Sigmoid colon (tissue), 7 donors: ENCODE measurements at regions of chr1 and their contacts with region 1.

Region 1: DNA sequence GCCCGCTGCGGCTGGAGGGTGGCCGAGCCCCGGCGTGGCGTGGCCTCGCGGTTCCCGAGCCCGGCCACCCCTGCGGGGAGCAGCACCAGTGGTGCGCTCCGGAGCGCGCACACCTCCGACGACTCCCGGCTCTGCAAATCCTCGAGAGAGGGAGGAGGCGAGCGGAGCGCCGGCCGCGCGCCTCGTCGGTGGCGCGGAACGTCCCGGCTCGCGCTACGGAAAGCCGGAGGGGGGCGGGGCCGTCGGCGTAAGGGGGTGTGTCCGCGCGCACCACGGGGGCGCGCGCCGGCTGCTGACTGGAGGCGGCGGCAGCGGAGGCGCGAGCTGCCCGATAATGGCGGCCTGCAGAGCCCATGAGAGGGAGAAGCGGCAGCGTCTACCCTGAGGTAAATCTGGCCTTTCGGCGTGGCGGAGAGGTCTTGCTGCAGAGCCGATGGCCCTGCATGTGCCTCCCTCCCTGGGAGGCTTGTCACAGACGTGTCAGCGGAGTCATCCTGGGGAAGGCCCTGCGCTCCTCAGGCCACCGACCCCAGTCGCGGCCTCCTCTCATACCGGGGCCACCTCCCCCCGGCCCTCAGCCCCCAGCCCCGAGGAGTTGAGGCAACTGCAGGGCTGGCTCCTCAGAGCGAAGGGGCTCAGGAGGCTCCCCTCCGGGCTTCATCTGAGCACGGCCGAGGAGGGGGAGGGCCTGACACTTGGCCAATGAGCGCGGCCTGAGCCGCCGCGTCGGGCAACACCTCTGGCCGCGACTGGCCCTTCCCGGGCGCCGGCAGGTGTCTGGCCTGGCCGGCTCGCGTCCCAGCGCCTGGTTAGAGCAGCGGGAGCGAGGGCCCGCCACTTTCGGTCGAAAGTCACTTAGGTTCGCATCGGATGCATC is at the start of gene PDIK1L:
- DNase-seq: peak; percentile 96
- H3K4me3 ChIP-seq: peak within 1 kb of the TSS; percentile 90 to 97 (median 96)
- H3K27ac ChIP-seq: peak within 1 kb of the TSS; percentile 89 to 96 (median 95)
- H3K4me1 ChIP-seq: peaks cover 0 to 27% (median 23%) of the 10 kb centered on the region in 4 donors
- H3K27me3 ChIP-seq: no peaks in the 10 kb centered on the region
- CTCF ChIP-seq: no peak
- EP300 ChIP-seq: no peak
- POLR2A ChIP-seq: peak in 1 of 2 donors; percentile 21
- total RNA-seq, gene PDIK1L: 4.2 to 15.7 (median 6.6) TPM

Region 2: DNA sequence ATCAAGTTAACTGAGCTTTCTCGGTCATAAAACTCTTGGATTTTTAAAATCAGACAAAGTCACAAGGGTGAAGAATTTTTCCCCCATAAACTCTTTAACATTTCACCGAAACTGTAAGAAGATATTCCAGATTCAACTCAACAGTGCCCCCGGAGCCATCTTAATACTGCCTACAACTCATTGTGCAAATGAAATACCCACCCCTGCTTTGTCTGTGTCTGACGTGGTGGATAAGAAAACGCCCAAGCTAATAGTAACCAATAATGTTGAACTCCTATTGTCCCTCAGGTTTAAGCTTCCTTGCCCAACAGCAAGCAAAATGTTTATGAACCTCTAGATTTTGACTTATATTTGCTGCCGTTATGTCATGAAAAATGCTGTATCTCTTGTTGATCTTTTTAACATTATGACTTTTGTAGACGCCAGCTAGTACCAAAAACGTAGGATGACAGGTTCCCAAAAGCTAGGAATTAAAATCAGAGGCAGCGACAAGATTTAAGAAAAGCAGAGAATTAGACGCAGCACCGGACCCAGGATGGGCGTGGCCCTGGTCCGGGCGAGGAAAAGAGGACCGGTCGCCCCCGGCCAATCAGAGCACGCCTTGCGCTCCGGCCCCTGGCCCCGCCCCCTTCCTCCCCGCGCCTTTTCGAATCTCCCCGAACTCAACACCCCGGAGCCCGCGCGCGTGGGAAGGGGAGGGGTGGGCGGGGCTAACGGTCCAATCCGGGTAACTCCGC is 206.7 kb before region 1 on chr1:
- intact Hi-C with region 1: loop called (anchors 5 kb)
- DNase-seq: peak; percentile 97
- H3K4me3 ChIP-seq: peak overlapping the region; percentile 61 to 75 (median 68)
- H3K27ac ChIP-seq: peak overlapping the region; percentile 76 to 79 (median 78)
- H3K4me1 ChIP-seq: peaks cover 0 to 29% (median 20%) of the 10 kb centered on the region in 4 donors
- H3K27me3 ChIP-seq: no peaks in the 10 kb centered on the region
- CTCF ChIP-seq: no peak
- EP300 ChIP-seq: no peak
- POLR2A ChIP-seq: no peak

Region 3: DNA sequence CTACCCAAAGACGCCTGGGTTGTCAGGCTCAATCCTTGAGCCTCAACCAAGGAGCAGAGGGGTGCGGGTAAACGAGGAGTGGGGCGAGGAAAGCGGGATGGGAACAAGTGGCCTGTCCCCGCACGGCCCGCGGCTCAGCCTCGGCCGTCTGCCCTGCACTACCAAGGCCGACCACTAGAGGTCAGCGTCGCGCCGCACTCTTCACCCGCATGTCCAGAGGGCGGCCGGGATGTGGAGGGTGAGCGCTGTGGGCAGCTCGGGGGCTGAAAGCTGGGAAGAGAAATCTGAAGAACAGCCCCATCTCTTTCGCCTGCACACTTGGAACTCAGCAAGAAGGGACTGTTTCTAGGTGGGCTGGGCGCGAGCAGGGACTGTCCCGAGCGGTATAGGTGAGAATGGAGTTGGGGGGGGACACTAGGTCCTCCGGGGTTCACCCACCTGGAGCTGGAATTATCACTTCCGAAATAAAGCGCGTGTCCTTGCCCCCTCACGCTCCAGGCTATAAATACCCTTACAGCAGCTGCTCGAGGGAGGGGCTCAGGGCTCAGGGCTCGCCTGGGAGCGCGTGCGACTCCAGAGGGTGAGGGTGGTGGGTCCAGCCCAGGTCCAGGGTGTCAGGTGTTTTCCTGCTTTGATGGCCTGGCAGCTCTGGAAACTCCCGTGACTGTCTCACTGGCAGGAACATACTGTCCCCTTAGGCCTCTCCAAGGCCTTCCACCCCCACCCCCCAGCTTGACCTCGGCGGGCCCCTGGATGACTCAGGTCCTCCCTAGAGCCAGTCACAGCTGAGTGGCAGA is 75.6 kb before region 1 on chr1:
- intact Hi-C with region 1: loop called (anchors 2 kb)
- DNase-seq: peak; percentile 86
- H3K4me3 ChIP-seq: peak overlapping the region; percentile 58 to 80 (median 75)
- H3K27ac ChIP-seq: peak overlapping the region; percentile 84 to 91 (median 88)
- H3K4me1 ChIP-seq: peaks cover 0 to 15% (median 11%) of the 10 kb centered on the region in 4 donors
- H3K27me3 ChIP-seq: peaks cover 0 to 7% (median 0%) of the 10 kb centered on the region in 3 donors
- CTCF ChIP-seq: peak; percentile 97 to 100 (median 99)
- EP300 ChIP-seq: no peak
- POLR2A ChIP-seq: no peak

Region 4: GRCh38 chr1:26169669-26170471 is 58.1 kb after region 1 on chr1 and contains the start of gene ZNF593:
- intact Hi-C with region 1: loop called (anchors 2 kb)
- DNase-seq: peak; percentile 97
- H3K4me3 ChIP-seq: peak within 1 kb of the TSS; percentile 84 to 93 (median 86)
- H3K27ac ChIP-seq: peak within 1 kb of the TSS; percentile 78 to 85 (median 82)
- H3K4me1 ChIP-seq: peaks cover 0 to 21% (median 14%) of the 10 kb centered on the region in 4 donors
- H3K27me3 ChIP-seq: no peaks in the 10 kb centered on the region
- CTCF ChIP-seq: peak; percentile 88 to 91 (median 90)
- EP300 ChIP-seq: no peak
- POLR2A ChIP-seq: no peak
- total RNA-seq, gene ZNF593: 16.3 to 37.2 (median 32.1) TPM

Region 5: GRCh38 chr1:26233903-26234643 is 122.3 kb after region 1 on chr1 and contains the start of gene CEP85:
- intact Hi-C with region 1: loop called (anchors 5 kb)
- DNase-seq: peak; percentile 99
- H3K4me3 ChIP-seq: peak within 1 kb of the TSS; percentile 58 to 67 (median 60)
- H3K27ac ChIP-seq: peak within 1 kb of the TSS; percentile 89 to 94 (median 90)
- H3K4me1 ChIP-seq: peaks cover 0 to 13% (median 8%) of the 10 kb centered on the region in 4 donors
- H3K27me3 ChIP-seq: peaks cover 0 to 3% (median 0%) of the 10 kb centered on the region in 3 donors
- CTCF ChIP-seq: peak in 3 of 4 experiments; percentile 33 to 79 (median 66)
- EP300 ChIP-seq: no peak
- POLR2A ChIP-seq: peak; percentile 54 to 80
- total RNA-seq, gene CEP85: 1.9 to 5.4 (median 3.3) TPM

Region 6: DNA sequence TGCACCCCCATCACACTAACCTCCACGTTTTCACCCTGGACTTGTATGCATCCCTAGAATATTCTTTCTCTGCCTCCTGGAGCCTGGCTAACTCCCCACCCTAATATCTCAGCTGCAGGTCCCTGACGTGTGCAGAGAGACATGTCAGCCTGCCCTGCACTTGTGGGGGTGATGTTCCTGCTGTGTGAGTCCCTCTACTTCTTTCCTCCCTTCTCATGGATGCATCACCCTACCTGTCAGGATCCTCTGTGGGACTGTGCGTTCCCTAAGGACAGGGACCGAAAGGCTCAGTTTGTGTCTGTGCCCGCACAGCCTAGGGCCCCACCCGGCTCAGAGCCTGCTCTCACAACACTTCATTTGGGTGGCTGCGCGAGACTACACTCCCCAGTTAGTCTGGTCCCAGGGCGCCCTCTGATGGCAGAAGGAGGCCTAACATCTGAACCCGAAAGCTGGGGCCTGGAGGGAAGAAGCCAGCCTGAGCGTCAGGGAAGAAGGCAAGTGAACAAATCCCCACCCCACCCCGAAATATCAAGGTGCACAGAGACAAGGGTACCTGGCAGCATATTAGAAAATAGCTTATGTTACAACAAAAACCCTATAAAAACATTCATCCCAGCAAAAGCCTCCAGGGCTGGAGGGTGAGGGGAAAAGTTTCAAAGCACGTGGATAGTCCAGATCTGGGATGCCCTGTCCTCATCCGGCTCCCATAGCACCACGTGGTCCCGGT is 209.7 kb after region 1 on chr1:
- intact Hi-C with region 1: loop called (anchors 5 kb)
- DNase-seq: peak; percentile 96
- H3K4me3 ChIP-seq: no peak overlapping the region
- H3K27ac ChIP-seq: no peak overlapping the region
- H3K4me1 ChIP-seq: peaks cover 0 to 6% (median 5%) of the 10 kb centered on the region in 4 donors
- H3K27me3 ChIP-seq: no peaks in the 10 kb centered on the region
- CTCF ChIP-seq: peak; percentile 83 to 93 (median 86)
- EP300 ChIP-seq: no peak
- POLR2A ChIP-seq: no peak